ENCODE measurements at regions of chr7 and their contacts with region 1.

Region 1: GRCh38 chr7:44194069-44194468 is 4.8 kb upstream of the GCK start:
- DNase-seq: no peak
- ATAC-seq: no peak
- H3K4me3 ChIP-seq: no peak overlapping the region
- H3K27ac ChIP-seq: no peak overlapping the region
- H3K4me1 ChIP-seq: no peaks in the 10 kb centered on the region
- H3K27me3 ChIP-seq: peaks cover 0 to 21% (median 0%) of the 10 kb centered on the region in 9 donors
- CTCF ChIP-seq: no peak
- POLR2A ChIP-seq: no peak

Region 2: GRCh38 chr7:44082541-44083207 is 111.4 kb before region 1 on chr7:
- intact Hi-C with region 1: loop called in 1 of 10 experiments (anchors 5 kb)
- DNase-seq: peak; percentile 99 to 100 (median 99)
- ATAC-seq: peak; percentile 93 to 96 (median 95)
- H3K4me3 ChIP-seq: peak overlapping the region; percentile 69 to 98 (median 87)
- H3K27ac ChIP-seq: peak overlapping the region; percentile 82 to 97 (median 92)
- H3K4me1 ChIP-seq: peaks cover 0 to 53% (median 26%) of the 10 kb centered on the region in 12 donors
- H3K27me3 ChIP-seq: no peaks in the 10 kb centered on the region
- CTCF ChIP-seq: peak in 1 of 12 donors; percentile 7
- POLR2A ChIP-seq: peak; percentile 34 to 82

Region 3: DNA sequence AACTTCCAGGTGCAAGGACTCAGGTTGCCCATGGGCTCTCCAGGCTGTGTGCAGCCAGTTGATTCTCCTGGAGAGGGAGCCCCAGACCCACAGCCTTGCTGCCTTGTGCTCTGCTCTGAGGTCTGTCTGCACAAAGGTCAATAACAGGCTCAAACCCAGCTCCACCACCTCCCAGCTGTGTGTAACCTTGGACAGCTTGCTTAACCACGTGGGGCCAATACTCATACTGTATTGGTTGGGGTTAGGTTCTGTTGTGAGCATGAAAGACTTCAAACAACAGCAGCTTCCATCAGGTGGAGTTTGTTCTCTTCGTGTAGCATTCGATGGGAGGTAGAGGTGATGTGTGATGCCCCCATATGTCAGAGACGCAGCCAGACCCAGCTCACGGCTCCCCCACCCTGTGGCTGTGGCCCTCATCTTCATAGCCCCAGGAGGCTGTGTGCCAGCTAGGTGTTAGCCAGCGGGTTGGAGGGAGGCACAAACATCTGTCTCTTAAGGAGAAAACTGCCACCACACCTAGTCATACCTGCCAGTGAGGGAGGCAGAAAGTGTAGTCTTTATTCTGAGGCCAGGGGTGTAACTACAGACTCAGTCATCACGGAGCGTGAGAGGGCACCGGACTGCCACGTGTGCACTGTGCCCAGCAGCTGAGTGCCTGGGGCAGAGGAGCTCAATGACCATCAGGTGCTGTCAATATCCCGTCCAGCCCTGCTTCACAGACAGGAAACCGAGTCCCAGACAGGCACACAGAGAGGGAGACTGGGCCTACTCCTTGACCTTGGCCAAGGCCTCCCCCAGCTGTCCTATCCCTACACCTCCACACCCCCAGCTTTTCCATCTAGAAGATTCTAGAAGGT is 62.7 kb before region 1 on chr7:
- intact Hi-C with region 1: loop called in 6 of 10 experiments (anchors 2 to 10 kb)
- DNase-seq: peak in 2 of 5 donors; percentile 38 to 63
- ATAC-seq: peak; percentile 45 to 79 (median 68)
- H3K4me3 ChIP-seq: no peak overlapping the region
- H3K27ac ChIP-seq: peak overlapping the region; percentile 1 to 89 (median 70)
- H3K4me1 ChIP-seq: peaks cover 0 to 39% (median 10%) of the 10 kb centered on the region in 12 donors
- H3K27me3 ChIP-seq: no peaks in the 10 kb centered on the region
- CTCF ChIP-seq: peak in 10 of 12 donors; percentile 22 to 52 (median 35)
- POLR2A ChIP-seq: no peak

Region 4: GRCh38 chr7:44145969-44146911 is 47.8 kb before region 1 on chr7:
- intact Hi-C with region 1: loop called in 3 of 10 experiments (anchors 5 kb)
- DNase-seq: peak; percentile 83 to 92 (median 90)
- ATAC-seq: peak; percentile 70 to 95 (median 88)
- H3K4me3 ChIP-seq: peak overlapping the region; percentile 44 to 68 (median 54)
- H3K27ac ChIP-seq: peak overlapping the region in 1 of 12 donors; percentile 15
- H3K4me1 ChIP-seq: peaks cover 0 to 19% (median 12%) of the 10 kb centered on the region in 12 donors
- H3K27me3 ChIP-seq: peaks cover 0 to 18% (median 0%) of the 10 kb centered on the region in 9 donors
- CTCF ChIP-seq: no peak
- POLR2A ChIP-seq: no peak